B cell (primary cell): ENCODE measurements at regions of chr15 and their contacts with region 1.

Region 1: GRCh38 chr15:59247364-59247763 is 40.7 kb downstream of the LDHAL6B start:
- DNase-seq: peak; percentile 81
- ATAC-seq: peak; percentile 52
- H3K4me3 ChIP-seq: no peak overlapping the region
- H3K4me3 Mint-ChIP-seq: no peak overlapping the region
- H3K27ac ChIP-seq: no peak overlapping the region
- H3K27ac Mint-ChIP-seq: peak overlapping the region; percentile 37
- H3K4me1 ChIP-seq: peaks cover 30 to 42% of the 10 kb centered on the region in 2 donors
- H3K4me1 Mint-ChIP-seq: peaks cover 59% of the 10 kb centered on the region
- H3K27me3 ChIP-seq: no peaks in the 10 kb centered on the region
- H3K27me3 Mint-ChIP-seq: no peaks in the 10 kb centered on the region
- CTCF ChIP-seq: peak; percentile 80

Region 2: DNA sequence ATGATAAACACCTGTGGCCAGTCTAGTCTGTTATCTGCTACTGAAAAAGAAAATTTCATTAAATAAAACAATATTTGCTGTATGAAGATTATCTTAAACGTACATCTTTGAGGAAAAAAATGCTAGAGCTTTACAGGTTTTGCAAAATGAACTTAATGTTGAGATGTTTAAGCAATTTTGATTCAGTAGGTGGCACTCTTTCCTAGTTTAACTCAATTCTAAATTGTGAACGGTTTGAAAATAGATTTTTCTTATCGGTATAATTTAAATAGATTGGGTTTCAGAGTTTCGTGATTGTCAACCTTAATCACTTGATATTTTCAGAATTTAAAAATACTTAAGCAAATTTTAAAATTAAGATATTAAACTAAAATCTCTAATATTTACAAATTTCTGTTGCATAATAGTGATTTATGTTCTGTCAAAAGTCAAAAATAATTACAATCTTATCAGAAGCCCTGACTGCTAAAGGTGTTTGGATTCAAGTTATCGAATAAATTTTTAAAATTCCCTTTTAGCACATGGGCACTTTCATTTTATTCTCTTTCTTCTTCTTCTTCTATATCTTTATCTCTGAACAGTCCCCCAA is 266.9 kb before region 1 on chr15:
- CTCF ChIA-PET with region 1: interaction called, 8 read pairs
- POLR2A ChIA-PET with region 1: no interaction called
- intact Hi-C with region 1: loop called (anchors 1 kb)
- DNase-seq: peak; percentile 63
- ATAC-seq: no peak
- H3K4me3 ChIP-seq: no peak overlapping the region
- H3K4me3 Mint-ChIP-seq: peak overlapping the region; percentile 67
- H3K27ac ChIP-seq: peak overlapping the region; percentile 70 to 75
- H3K27ac Mint-ChIP-seq: peak overlapping the region; percentile 98
- H3K4me1 ChIP-seq: peaks cover 50 to 59% of the 10 kb centered on the region in 2 donors
- H3K4me1 Mint-ChIP-seq: peaks cover 49% of the 10 kb centered on the region
- H3K27me3 ChIP-seq: no peaks in the 10 kb centered on the region
- H3K27me3 Mint-ChIP-seq: no peaks in the 10 kb centered on the region
- CTCF ChIP-seq: peak; percentile 79

Region 3: GRCh38 chr15:59237119-59237855 is 10.1 kb before region 1 on chr15:
- CTCF ChIA-PET with region 1: interaction called, 19 read pairs
- POLR2A ChIA-PET with region 1: no interaction called
- intact Hi-C with region 1: no loop called
- DNase-seq: peak; percentile 57
- ATAC-seq: peak; percentile 73
- H3K4me3 ChIP-seq: no peak overlapping the region
- H3K4me3 Mint-ChIP-seq: peak overlapping the region; percentile 60
- H3K27ac ChIP-seq: peak overlapping the region; percentile 33 to 81
- H3K27ac Mint-ChIP-seq: peak overlapping the region; percentile 53
- H3K4me1 ChIP-seq: peaks cover 20 to 23% of the 10 kb centered on the region in 2 donors
- H3K4me1 Mint-ChIP-seq: peaks cover 31% of the 10 kb centered on the region
- H3K27me3 ChIP-seq: no peaks in the 10 kb centered on the region
- H3K27me3 Mint-ChIP-seq: no peaks in the 10 kb centered on the region
- CTCF ChIP-seq: no peak

Region 4: GRCh38 chr15:59329570-59330350 is 82.4 kb after region 1 on chr15:
- CTCF ChIA-PET with region 1: interaction called, 14 read pairs
- POLR2A ChIA-PET with region 1: no interaction called
- intact Hi-C with region 1: no loop called
- DNase-seq: no peak
- ATAC-seq: no peak
- H3K4me3 ChIP-seq: no peak overlapping the region
- H3K4me3 Mint-ChIP-seq: peak overlapping the region; percentile 52
- H3K27ac ChIP-seq: no peak overlapping the region
- H3K27ac Mint-ChIP-seq: no peak overlapping the region
- H3K4me1 ChIP-seq: peaks cover 67 to 74% of the 10 kb centered on the region in 2 donors
- H3K4me1 Mint-ChIP-seq: peaks cover 84% of the 10 kb centered on the region
- H3K27me3 ChIP-seq: no peaks in the 10 kb centered on the region
- H3K27me3 Mint-ChIP-seq: no peaks in the 10 kb centered on the region
- CTCF ChIP-seq: no peak

Region 5: GRCh38 chr15:59410391-59410896 is 163.1 kb after region 1 on chr15:
- CTCF ChIA-PET with region 1: interaction called, 116 read pairs
- POLR2A ChIA-PET with region 1: interaction called, 3 read pairs
- intact Hi-C with region 1: loop called (anchors 1 kb)
- DNase-seq: no peak
- ATAC-seq: no peak
- H3K4me3 ChIP-seq: no peak overlapping the region
- H3K4me3 Mint-ChIP-seq: peak overlapping the region; percentile 45
- H3K27ac ChIP-seq: peak overlapping the region; percentile 74 to 85
- H3K27ac Mint-ChIP-seq: peak overlapping the region; percentile 78
- H3K4me1 ChIP-seq: peaks cover 83 to 87% of the 10 kb centered on the region in 2 donors
- H3K4me1 Mint-ChIP-seq: peaks cover 81% of the 10 kb centered on the region
- H3K27me3 ChIP-seq: no peaks in the 10 kb centered on the region
- H3K27me3 Mint-ChIP-seq: no peaks in the 10 kb centered on the region
- CTCF ChIP-seq: no peak

Region 6: DNA sequence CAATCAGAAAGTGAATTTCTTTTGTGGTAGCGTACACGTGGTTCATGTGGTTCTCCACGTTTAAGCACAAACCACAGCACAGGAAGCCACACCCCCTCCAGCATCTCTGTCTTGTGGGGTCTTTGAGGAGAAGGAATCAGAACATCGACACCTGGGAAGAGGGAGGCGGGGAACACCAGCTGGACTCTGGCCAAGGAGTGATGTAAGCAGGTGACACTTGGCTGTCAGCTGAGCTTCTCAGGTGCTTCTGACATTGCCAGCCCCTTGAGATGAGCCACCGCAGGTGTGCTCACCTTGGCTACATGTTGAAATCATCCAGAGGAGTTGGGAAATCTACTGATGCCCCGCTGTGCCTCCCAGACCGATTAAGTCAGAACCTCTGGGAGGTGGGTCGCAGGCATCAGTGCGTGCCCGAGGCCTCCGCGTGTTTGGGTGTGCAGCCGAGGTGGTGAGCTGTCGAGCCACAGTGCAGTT is 275.7 kb after region 1 on chr15:
- CTCF ChIA-PET with region 1: interaction called, 58 read pairs
- POLR2A ChIA-PET with region 1: no interaction called
- intact Hi-C with region 1: no loop called
- DNase-seq: peak; percentile 75
- ATAC-seq: peak; percentile 40
- H3K4me3 ChIP-seq: peak overlapping the region in 1 of 5 experiments; percentile 11
- H3K4me3 Mint-ChIP-seq: peak overlapping the region; percentile 77
- H3K27ac ChIP-seq: peak overlapping the region; percentile 72 to 94
- H3K27ac Mint-ChIP-seq: peak overlapping the region; percentile 93
- H3K4me1 ChIP-seq: peaks cover 63 to 64% of the 10 kb centered on the region in 2 donors
- H3K4me1 Mint-ChIP-seq: peaks cover 57% of the 10 kb centered on the region
- H3K27me3 ChIP-seq: no peaks in the 10 kb centered on the region
- H3K27me3 Mint-ChIP-seq: no peaks in the 10 kb centered on the region
- CTCF ChIP-seq: no peak